ENCODE measurements at regions of chr12 and their contacts with region 1.

Region 1: DNA sequence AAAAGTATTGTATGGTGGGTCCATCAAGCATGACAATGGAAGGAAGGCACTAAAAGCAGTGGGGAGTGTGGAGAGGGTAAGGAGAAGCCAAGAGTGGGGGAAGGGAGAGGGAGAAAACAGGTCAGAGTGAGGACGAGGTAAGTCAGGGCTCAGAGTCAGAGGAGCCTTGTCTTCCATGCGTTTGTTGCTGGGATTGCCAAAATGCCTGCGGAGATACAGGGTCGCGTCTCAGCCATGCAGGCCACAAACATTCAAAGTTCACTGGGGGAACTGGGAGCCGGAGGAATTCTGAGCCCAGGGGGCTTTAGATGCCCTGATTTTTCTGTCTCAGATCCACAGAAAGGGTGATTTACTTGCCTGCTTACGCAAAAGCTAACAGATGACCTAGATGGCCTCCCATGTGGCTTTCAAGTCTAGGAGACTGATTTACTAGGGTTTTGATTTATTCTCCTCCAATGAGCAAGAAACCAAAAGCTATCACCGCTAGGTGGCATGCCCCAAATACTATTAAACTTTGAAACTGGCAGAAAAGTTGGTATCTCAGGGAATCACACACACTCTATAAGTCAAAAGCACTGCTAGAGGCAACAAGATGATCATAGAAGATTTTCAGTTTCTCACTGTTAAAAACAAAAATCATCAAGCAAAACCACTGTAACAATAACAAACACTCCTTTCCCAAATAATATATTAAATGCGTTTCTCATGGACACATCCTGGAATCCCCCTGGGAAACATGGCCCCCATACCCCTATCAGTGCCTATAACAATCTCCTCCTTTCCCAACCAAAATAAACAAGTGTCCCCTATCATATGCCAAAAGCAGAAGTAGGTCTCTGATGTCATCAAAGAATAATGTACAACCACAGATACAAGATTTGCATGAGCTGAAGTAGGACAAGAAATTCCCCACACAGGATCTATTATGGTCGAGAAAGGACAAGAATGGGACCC is 26.6 kb upstream of the MDM1 start:
- DNase-seq: peak; percentile 66
- H3K4me3 Mint-ChIP-seq: no peak overlapping the region
- H3K27ac Mint-ChIP-seq: no peak overlapping the region
- H3K4me1 Mint-ChIP-seq: no peaks in the 10 kb centered on the region
- H3K27me3 Mint-ChIP-seq: peaks cover 26% of the 10 kb centered on the region
- CTCF ChIP-seq: no peak

Region 2: DNA sequence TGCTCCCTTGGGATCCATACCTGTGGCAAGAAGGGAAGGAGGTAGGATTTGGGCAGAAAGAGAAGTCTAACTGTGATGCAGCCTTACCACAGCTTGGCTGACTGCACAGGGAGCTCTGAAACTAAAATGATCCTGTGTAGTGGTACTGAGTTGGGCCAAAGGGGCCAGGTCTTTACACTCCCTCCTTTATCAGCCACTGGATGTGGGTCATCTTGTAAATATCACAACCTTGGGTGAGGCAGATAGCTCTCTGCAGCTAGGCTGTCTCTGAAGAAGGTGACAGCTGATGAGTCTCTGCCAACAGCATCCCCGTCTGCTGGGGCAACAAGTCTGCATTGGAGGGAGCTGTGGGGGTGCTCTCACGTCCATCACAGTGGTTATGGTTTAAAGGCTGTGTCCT is 1185.6 kb before region 1 on chr12:
- CTCF ChIA-PET with region 1: no interaction called
- intact Hi-C with region 1: no loop called
- DNase-seq: no peak
- H3K4me3 Mint-ChIP-seq: no peak overlapping the region
- H3K27ac Mint-ChIP-seq: no peak overlapping the region
- H3K4me1 Mint-ChIP-seq: no peaks in the 10 kb centered on the region
- H3K27me3 Mint-ChIP-seq: peaks cover 77% of the 10 kb centered on the region
- CTCF ChIP-seq: no peak

Region 3: GRCh38 chr12:68331500-68331868 is 27.3 kb before region 1 on chr12:
- CTCF ChIA-PET with region 1: no interaction called
- intact Hi-C with region 1: no loop called
- DNase-seq: no peak
- H3K4me3 Mint-ChIP-seq: peak overlapping the region; percentile 81
- H3K27ac Mint-ChIP-seq: peak overlapping the region; percentile 56
- H3K4me1 Mint-ChIP-seq: peaks cover 11% of the 10 kb centered on the region
- H3K27me3 Mint-ChIP-seq: peaks cover 14% of the 10 kb centered on the region
- CTCF ChIP-seq: no peak

Region 4: DNA sequence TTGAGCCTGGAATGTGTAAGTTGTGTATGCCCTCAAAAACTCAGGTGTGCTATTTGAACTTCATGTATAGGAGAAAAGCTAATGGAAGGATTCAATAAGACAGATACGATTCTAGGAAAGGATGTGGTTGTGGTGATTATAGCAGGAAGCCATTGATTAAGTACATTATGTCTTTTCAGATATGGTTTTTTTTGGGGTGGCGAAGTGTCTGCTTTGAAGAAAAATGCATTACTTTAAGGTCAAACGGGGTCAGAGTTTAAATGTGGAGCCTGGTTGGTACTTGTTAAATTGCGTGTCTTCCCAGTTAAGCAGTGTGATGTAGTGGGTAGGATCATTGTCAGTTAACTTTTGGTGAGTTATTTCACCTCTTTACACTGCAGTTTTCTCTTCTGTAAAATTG is 315.0 kb after region 1 on chr12:
- CTCF ChIA-PET with region 1: interaction called, 6 read pairs
- intact Hi-C with region 1: loop called (anchors 5 kb)
- DNase-seq: no peak
- H3K4me3 Mint-ChIP-seq: no peak overlapping the region
- H3K27ac Mint-ChIP-seq: no peak overlapping the region
- H3K4me1 Mint-ChIP-seq: no peaks in the 10 kb centered on the region
- H3K27me3 Mint-ChIP-seq: no peaks in the 10 kb centered on the region
- CTCF ChIP-seq: no peak

Region 5: GRCh38 chr12:68727776-68728175 is 369.0 kb after region 1 on chr12:
- CTCF ChIA-PET with region 1: no interaction called
- intact Hi-C with region 1: loop called (anchors 10 kb)
- DNase-seq: no peak
- H3K4me3 Mint-ChIP-seq: no peak overlapping the region
- H3K27ac Mint-ChIP-seq: no peak overlapping the region
- H3K4me1 Mint-ChIP-seq: no peaks in the 10 kb centered on the region
- H3K27me3 Mint-ChIP-seq: no peaks in the 10 kb centered on the region
- CTCF ChIP-seq: no peak

Measured in Calu3 (cell line).